ENCODE measurements at regions of chr1 and their contacts with region 1.

Region 1: DNA sequence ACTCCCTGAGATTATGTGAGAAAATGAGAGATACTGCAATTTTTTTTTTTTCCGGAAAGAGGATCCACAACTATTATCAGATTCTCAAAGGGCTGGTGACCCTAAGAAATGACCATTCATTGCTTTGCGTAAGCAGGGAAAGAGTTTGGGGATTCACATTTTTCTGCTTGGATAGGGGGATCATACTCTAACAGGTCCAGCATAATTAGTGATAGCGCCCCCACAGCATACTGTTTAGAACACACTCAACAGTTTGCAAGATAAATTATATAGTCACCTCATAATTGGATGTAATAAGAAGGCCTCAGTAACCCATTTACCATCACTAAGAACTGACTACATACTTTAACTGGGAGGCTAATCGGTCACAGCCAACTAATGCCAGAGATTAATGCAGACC is 1.9 kb downstream of the CCT3 start:
- DNase-seq: peak; percentile 31
- ATAC-seq: no peak
- H3K4me3 ChIP-seq: peak overlapping the region; percentile 98
- H3K27ac ChIP-seq: no peak overlapping the region
- H3K4me1 ChIP-seq: peaks cover 13% of the 10 kb centered on the region
- H3K27me3 ChIP-seq: no peaks in the 10 kb centered on the region
- CTCF ChIP-seq: peak; percentile 78

Region 2: DNA sequence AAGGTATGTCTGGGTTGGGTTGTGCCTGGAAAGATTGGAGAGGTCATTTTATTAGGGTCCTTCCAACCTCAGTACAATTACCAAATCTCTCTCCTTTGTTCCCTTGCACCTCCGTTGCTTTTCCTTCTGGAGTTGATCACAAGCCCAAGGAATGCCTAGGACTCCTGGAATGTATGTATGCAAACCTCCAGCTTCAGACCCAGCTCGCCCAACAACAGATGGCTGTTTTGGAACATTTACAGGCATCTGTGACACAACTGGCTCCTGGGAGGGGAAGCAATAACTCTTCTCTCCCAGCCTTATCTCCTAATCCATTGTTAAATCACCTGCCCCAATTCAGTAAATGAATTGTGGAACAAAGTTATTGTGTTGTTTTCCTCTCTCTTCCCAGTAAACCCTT is 10.4 kb after region 1 on chr1:
- CTCF ChIA-PET with region 1: no interaction called
- POLR2A ChIA-PET with region 1: no interaction called
- intact Hi-C with region 1: loop called (anchors 1 kb)
- DNase-seq: no peak
- ATAC-seq: no peak
- H3K4me3 ChIP-seq: no peak overlapping the region
- H3K27ac ChIP-seq: no peak overlapping the region
- H3K4me1 ChIP-seq: no peaks in the 10 kb centered on the region
- H3K27me3 ChIP-seq: no peaks in the 10 kb centered on the region
- CTCF ChIP-seq: no peak

Region 3: DNA sequence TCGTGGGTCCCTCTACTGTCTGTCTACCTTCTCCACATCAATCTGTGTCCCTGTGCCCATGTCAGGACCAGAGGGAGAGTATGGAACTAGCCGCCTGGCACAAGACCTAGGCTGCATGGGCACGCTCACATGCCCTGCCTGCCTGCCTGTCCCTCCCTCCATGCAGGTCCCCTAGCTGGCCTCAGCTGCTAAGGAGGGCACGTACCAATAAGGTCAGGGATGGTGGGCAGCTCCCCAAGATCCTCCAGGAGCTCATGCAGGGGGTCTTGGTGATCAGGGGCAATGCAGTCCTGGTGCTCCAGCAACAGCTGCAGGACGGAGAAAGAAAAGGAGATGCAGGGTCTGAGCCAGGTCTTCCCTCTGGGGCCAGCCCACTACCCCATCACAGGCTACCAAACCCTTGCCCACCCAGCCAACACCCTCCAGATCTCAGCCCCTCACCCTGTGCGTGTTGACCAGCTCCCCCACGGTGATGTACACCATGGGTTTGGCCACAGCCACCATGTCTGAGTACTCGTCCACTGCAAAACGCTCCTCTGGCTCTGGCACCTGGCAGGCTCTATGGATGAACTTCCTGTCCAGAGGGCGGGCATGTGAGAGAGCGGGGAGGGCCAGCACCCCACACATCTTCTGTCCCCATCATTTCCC is 197.4 kb after region 1 on chr1:
- CTCF ChIA-PET with region 1: no interaction called
- POLR2A ChIA-PET with region 1: no interaction called
- intact Hi-C with region 1: no loop called
- DNase-seq: no peak
- ATAC-seq: no peak
- H3K4me3 ChIP-seq: no peak overlapping the region
- H3K27ac ChIP-seq: no peak overlapping the region
- H3K4me1 ChIP-seq: no peaks in the 10 kb centered on the region
- H3K27me3 ChIP-seq: no peaks in the 10 kb centered on the region
- CTCF ChIP-seq: no peak

Region 4: DNA sequence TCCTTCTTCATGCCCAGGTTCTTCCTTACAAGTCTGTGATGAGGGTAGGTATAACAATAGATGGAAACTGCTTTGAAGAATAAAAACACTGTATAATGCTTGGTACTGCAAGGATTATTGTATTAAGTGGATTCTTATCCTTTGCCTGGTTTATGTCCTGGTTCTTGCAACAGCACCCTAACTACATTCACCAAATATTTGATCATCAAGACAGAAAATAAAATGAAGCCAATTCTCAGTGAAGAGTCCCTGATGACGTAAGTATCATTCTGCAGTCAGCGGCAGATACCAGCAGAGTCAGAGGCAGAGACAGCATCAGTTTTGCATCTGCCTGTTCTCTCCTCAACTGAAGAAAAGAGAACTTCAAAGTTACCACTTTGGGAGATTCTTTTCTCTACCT is 689.6 kb after region 1 on chr1:
- CTCF ChIA-PET with region 1: no interaction called
- POLR2A ChIA-PET with region 1: no interaction called
- intact Hi-C with region 1: no loop called
- DNase-seq: no peak
- ATAC-seq: no peak
- H3K4me3 ChIP-seq: no peak overlapping the region
- H3K27ac ChIP-seq: no peak overlapping the region
- H3K4me1 ChIP-seq: no peaks in the 10 kb centered on the region
- H3K27me3 ChIP-seq: no peaks in the 10 kb centered on the region
- CTCF ChIP-seq: no peak

Measured in PC-3 (cell line).